ENCODE measurements at regions of chr15 and their contacts with region 1.

Region 1: GRCh38 chr15:30991255-30992072 is at the start of gene MTMR10:
- DNase-seq: peak; percentile 88
- total RNA-seq, gene MTMR10: 27.5 TPM

Region 2: DNA sequence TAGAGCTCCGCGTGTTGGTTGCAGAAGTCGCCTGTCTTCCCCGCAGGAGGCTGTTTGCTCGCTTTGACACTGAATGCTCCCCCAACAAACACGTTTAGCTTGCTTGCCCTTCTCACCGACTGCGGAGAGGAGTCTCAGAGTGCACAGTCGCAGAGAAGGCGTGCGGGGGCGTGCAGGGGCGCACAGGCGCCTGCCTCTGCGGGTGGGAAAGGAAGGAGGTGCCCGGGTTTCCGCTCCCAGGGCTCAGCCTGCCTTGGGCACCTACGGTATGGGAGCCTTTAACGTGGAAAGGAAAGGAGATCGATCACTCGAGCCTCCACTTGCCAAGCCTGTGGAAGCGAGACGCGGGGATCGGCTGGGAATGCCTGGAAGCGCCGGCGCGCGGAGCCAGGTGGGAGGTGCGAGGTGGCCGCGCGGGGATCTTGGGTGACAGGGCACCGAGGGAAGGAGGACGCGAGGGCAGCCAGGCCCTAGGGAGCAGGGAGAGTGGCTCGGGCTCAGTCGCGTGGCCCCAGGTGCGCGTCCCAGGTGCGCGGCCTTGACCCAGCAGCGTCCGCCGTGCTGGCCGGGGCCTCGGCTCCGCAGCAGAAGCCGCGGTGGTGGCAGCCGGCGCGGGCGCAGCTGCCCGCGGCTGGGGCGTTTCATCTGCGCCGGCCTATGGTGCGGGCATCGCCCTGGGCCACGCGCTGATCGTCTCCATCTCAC is 87.8 kb before region 1 on chr15 and contains the start of gene FAN1:
- intact Hi-C with region 1: loop called (anchors 1 kb)
- DNase-seq: peak; percentile 92
- total RNA-seq, gene FAN1: 15.9 TPM

Region 3: DNA sequence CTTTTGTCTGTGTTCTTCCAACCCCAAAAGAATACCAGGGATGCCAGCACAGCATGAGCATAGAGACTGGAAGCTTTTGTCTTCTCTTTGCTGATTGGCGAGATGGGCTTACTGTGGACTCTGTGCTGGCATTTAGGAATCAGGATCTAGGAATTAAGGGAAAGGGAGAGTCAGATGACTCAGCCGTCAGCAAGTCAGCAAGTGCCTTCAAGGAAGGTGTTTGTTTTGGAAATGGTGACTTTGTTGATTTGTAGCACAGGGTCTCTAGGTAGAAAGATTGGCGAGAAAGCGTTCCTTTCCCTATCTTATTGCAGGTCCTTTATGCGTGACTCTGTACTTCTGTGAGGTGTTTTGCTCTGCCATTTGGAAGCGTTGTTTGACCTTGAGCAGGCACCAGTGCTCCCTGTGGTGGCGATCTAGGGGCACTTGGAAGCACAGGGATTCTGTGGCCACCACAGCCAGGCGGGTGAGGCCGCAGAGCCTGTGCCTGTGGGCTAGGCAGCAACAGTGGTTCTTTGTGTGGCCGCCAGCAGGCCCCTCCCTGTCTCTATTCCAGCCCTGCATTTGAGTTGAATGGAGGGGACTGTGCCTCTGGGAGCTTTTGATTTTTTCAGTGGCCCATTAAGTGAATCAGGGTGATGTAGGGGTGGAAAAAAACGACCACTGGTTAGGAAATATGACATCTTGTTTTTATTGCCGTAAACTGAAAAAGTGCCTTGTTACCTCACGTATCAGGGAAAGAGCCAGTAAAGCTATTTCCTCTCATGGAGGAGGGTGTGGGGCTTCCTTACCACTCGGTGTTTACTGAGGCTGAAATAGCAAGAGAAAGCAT is 68.8 kb before region 1 on chr15:
- intact Hi-C with region 1: loop called (anchors 5 kb)
- DNase-seq: no peak

Region 4: DNA sequence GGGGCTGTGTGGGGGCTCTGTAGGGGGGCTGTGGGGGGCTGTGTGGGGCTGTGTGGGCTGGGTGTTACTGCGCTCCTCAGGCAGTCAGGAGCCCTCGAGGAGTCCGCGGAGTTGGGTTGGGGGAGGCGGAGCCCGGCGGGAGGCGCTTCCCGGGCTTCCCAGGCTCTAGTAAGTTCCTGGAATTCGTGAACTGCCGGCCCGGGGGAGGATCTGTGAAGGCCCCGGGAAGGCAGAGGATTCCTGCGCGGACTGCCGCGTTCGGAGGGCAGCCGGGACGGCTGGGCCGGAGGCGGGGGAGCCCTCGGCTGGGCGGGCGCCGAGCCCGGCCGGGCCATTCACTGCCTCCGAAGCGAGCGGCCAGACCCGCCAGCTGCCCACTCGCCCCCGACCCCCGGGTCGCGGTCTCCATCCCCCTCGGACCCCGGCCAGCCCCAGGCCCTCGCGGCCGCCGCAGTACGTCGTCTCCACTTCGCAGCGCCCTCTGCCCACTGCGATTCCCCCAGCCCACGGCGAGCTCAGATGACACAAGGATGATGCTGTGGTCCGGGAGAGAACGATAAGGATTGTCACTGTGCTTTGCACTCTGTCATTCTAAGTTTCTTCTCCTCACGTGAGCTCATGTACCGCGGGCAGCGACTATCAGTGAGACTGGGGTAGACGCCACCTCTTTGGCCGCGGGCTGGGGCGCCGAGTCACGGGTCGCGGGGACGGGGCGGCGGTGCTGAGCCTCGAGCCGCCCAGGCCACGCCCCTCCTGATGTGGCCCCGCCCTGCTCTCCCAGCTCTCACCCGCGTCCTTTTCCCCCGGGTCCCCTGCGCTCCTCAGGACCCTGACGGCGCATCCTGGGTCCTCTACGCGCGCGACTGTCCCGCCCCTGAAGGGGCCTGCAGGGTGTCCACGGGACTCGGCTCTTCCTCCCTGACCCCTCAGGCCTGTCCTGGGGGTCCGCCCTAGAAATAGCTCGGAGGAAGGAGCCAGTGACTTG is 400.5 kb after region 1 on chr15:
- intact Hi-C with region 1: loop called (anchors 10 kb)
- DNase-seq: peak; percentile 94

Measured in cardiac septum (tissue), 1 donor.